Upper lobe of right lung (tissue), 1 donor: ENCODE measurements at regions of chr9 and their contacts with region 1.

Region 1: DNA sequence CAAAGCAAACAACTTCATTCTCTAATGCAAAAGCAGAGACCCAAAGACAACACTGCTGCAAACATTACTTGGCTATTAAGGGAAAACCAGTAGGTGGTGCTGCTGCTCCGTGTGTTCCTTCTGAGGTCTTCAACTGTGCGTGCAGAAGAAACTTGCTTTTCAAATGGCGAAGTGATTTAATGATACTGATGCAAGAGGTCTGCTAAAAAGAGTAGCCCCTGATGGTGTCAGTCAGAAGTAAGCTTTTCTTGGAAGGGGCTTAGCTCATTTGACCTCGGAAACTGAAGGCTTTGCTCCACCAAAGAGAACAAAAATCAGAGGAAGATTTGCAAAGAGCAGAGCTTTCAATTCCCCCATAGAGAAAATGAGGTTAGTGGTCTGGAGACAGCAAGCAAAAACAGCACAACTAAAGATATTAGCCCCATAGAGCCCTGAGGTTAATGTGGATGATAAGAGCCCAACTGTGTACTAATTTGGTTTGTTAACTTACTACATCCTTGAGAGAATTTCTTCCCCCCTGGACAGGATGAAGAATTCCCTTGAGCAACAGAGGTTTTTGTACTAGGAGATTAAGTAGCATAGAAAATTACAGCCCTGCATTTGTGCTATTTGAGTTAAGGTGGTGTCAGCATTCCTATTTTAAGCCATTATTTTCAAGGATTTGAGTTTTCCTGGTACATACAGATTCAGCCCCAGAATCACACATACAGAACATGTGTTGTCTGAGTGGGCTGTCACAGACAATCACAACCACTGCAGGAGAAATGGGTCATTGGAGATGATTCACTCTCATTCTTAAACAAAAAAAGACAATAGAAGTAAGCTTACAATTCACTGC is 153.2 kb upstream of the C9orf72 start:
- DNase-seq: no peak
- ATAC-seq: peak; percentile 90
- H3K4me3 ChIP-seq: no peak overlapping the region
- H3K27ac ChIP-seq: no peak overlapping the region
- H3K4me1 ChIP-seq: peaks cover 5% of the 10 kb centered on the region
- H3K27me3 ChIP-seq: no peaks in the 10 kb centered on the region
- CTCF ChIP-seq: peak; percentile 81

Region 2: GRCh38 chr9:28073270-28073669 is 346.8 kb after region 1 on chr9:
- intact Hi-C with region 1: loop called (anchors 10 kb)
- DNase-seq: no peak
- ATAC-seq: peak; percentile 58
- H3K4me3 ChIP-seq: no peak overlapping the region
- H3K27ac ChIP-seq: no peak overlapping the region
- H3K4me1 ChIP-seq: no peaks in the 10 kb centered on the region
- H3K27me3 ChIP-seq: no peaks in the 10 kb centered on the region
- CTCF ChIP-seq: peak; percentile 61